CD8-positive, alpha-beta memory T cell (primary cell): ENCODE measurements at regions of chr3 and their contacts with region 1.

Region 1: DNA sequence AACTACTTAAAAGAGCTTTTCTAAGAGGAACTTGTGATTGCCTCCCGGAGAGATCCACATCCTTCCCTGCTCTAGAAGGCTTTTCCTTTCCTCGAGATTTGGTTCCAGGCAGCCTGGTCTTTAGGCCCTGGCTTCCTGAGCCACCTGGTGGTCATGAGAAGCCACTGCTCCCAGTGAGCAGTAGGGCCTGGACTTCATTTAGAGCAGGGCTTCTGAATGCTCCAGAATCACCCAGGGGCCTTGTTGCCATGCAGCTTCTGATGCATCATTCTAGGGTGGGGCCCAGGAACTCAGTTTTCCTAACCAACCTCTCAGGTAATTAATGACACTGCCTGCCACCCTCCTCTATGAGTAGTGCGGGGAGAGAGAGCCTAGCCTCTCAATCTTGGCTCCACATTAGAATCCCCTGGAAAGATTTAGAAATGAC is 29.6 kb downstream of the PSMD6 start:
- DNase-seq: peak; percentile 23 to 73 (median 56)
- H3K4me3 ChIP-seq: no peak overlapping the region
- H3K4me3 Mint-ChIP-seq: no peak overlapping the region
- H3K27ac ChIP-seq: no peak overlapping the region
- H3K27ac Mint-ChIP-seq: peak overlapping the region; percentile 37 to 88 (median 64)
- H3K4me1 ChIP-seq: peaks cover 17% of the 10 kb centered on the region
- H3K4me1 Mint-ChIP-seq: peaks cover 39 to 66% (median 50%) of the 10 kb centered on the region in 3 donors
- H3K27me3 ChIP-seq: no peaks in the 10 kb centered on the region
- H3K27me3 Mint-ChIP-seq: no peaks in the 10 kb centered on the region

Region 2: DNA sequence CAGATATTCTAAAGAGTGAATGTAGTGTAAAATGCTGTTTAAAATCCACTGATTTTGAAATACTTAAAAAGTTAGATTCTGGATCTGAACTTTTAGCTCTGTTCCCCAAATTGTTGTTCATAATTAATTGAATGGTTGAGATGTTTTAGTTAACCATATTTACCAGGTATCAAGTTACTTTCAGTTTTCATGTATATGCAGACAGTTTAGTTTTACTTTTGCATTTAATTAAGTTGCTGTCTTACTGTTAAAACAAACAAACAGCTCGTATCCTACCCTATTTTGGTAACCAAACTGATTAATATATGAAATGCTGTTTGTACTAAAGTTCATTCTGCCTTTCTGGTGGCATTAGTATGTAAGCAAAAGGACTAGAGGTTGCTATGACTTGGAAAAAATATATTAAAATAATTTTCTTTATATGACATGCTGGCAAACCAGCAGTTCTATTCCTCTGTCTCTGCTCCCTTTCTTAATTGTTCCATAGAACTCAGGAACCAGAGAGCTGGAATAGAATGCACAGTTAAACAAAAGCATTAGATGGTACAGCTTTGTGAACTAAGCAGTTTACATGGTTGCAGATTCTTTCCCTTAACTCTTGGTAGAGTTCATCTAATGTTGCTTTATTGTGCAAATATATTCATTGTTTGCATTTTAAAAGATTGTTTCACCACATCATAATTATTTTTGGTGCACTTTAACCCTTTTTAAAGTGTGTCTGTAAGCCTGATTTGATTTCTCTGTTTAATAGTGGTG is 42.0 kb before region 1 on chr3:
- CTCF ChIA-PET with region 1: interaction called, 18 read pairs
- POLR2A ChIA-PET with region 1: no interaction called
- DNase-seq: no peak
- H3K4me3 ChIP-seq: no peak overlapping the region
- H3K4me3 Mint-ChIP-seq: peak overlapping the region in 6 of 7 donors; percentile 27 to 76 (median 57)
- H3K27ac ChIP-seq: no peak overlapping the region
- H3K27ac Mint-ChIP-seq: peak overlapping the region; percentile 62 to 91 (median 78)
- H3K4me1 ChIP-seq: peaks cover 20% of the 10 kb centered on the region
- H3K4me1 Mint-ChIP-seq: peaks cover 49 to 67% (median 61%) of the 10 kb centered on the region in 3 donors
- H3K27me3 ChIP-seq: no peaks in the 10 kb centered on the region
- H3K27me3 Mint-ChIP-seq: no peaks in the 10 kb centered on the region

Region 3: DNA sequence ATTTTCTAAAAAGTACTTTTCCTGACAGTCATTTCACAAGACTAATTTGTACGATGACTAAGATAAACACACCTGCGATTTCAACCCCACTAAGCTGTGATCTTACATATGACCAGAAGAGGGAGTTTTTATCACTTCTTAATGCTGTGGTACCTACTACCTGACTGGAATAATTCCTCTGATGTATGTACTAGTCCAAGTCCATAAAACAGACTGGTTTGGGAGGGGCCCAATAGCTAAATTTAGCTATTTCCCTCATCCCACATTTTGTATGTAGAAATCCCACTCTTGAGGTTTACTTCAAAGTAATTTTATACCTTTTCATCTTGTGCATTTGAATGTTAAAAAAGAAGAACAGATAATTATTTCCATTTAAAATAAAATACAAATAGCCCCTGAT is 31.8 kb before region 1 on chr3:
- CTCF ChIA-PET with region 1: interaction called, 142 read pairs
- POLR2A ChIA-PET with region 1: interaction called, 5 read pairs
- DNase-seq: peak in 2 of 5 donors; percentile 58 to 62
- H3K4me3 ChIP-seq: no peak overlapping the region
- H3K4me3 Mint-ChIP-seq: no peak overlapping the region
- H3K27ac ChIP-seq: no peak overlapping the region
- H3K27ac Mint-ChIP-seq: peak overlapping the region in 3 of 8 donors; percentile 55 to 70 (median 65)
- H3K4me1 ChIP-seq: peaks cover 16% of the 10 kb centered on the region
- H3K4me1 Mint-ChIP-seq: peaks cover 36 to 77% (median 77%) of the 10 kb centered on the region in 3 donors
- H3K27me3 ChIP-seq: no peaks in the 10 kb centered on the region
- H3K27me3 Mint-ChIP-seq: no peaks in the 10 kb centered on the region

Region 4: GRCh38 chr3:63967675-63968611 is 25.7 kb before region 1 on chr3:
- CTCF ChIA-PET with region 1: interaction called, 142 read pairs
- POLR2A ChIA-PET with region 1: interaction called, 13 read pairs
- DNase-seq: peak; percentile 14 to 89 (median 63)
- H3K4me3 ChIP-seq: peak overlapping the region; percentile 98
- H3K4me3 Mint-ChIP-seq: peak overlapping the region; percentile 88 to 99 (median 90)
- H3K27ac ChIP-seq: peak overlapping the region; percentile 75
- H3K27ac Mint-ChIP-seq: peak overlapping the region; percentile 81 to 98 (median 94)
- H3K4me1 ChIP-seq: peaks cover 62% of the 10 kb centered on the region
- H3K4me1 Mint-ChIP-seq: peaks cover 58 to 97% (median 91%) of the 10 kb centered on the region in 3 donors
- H3K27me3 ChIP-seq: no peaks in the 10 kb centered on the region
- H3K27me3 Mint-ChIP-seq: no peaks in the 10 kb centered on the region

Region 5: GRCh38 chr3:63975723-63976122 is 17.9 kb before region 1 on chr3:
- CTCF ChIA-PET with region 1: interaction called, 142 read pairs
- POLR2A ChIA-PET with region 1: interaction called, 4 read pairs
- DNase-seq: no peak
- H3K4me3 ChIP-seq: no peak overlapping the region
- H3K4me3 Mint-ChIP-seq: peak overlapping the region; percentile 32 to 74 (median 49)
- H3K27ac ChIP-seq: no peak overlapping the region
- H3K27ac Mint-ChIP-seq: peak overlapping the region; percentile 68 to 95 (median 80)
- H3K4me1 ChIP-seq: peaks cover 92% of the 10 kb centered on the region
- H3K4me1 Mint-ChIP-seq: peaks cover 92 to 100% (median 100%) of the 10 kb centered on the region in 3 donors
- H3K27me3 ChIP-seq: no peaks in the 10 kb centered on the region
- H3K27me3 Mint-ChIP-seq: peaks cover 0 to 2% of the 10 kb centered on the region in 2 donors

Region 6: DNA sequence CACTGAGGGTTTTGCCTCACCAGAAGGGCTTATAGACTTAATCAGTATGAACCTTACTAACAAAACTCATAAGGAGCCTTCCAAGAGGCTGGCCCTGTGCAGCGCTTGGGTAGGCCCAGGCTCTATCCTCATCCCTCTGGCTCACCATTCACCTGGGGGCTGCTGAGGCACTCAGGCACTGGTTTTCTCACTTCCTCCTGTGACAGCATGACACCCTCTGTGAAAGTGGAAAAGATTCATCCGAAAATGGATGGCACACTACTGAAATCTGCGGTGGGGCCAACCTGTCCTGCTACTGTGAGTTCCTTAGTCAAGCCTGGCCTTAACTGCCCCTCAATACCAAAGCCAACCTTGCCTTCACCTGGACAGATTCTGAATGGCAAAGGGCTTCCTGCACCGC is 11.7 kb before region 1 on chr3:
- CTCF ChIA-PET with region 1: interaction called, 124 read pairs
- POLR2A ChIA-PET with region 1: interaction called, 3 read pairs
- DNase-seq: no peak
- H3K4me3 ChIP-seq: no peak overlapping the region
- H3K4me3 Mint-ChIP-seq: peak overlapping the region in 2 of 7 donors; percentile 12 to 34
- H3K27ac ChIP-seq: no peak overlapping the region
- H3K27ac Mint-ChIP-seq: peak overlapping the region in 7 of 8 donors; percentile 61 to 95 (median 83)
- H3K4me1 ChIP-seq: peaks cover 58% of the 10 kb centered on the region
- H3K4me1 Mint-ChIP-seq: peaks cover 72 to 96% (median 91%) of the 10 kb centered on the region in 3 donors
- H3K27me3 ChIP-seq: no peaks in the 10 kb centered on the region
- H3K27me3 Mint-ChIP-seq: no peaks in the 10 kb centered on the region

Region 7: GRCh38 chr3:64016941-64017620 is 23.4 kb after region 1 on chr3:
- CTCF ChIA-PET with region 1: interaction called, 12 read pairs
- POLR2A ChIA-PET with region 1: no interaction called
- DNase-seq: no peak
- H3K4me3 ChIP-seq: no peak overlapping the region
- H3K4me3 Mint-ChIP-seq: peak overlapping the region in 1 of 7 donors; percentile 24
- H3K27ac ChIP-seq: no peak overlapping the region
- H3K27ac Mint-ChIP-seq: peak overlapping the region in 6 of 8 donors; percentile 8 to 84 (median 52)
- H3K4me1 ChIP-seq: peaks cover 17% of the 10 kb centered on the region
- H3K4me1 Mint-ChIP-seq: peaks cover 38 to 62% (median 59%) of the 10 kb centered on the region in 3 donors
- H3K27me3 ChIP-seq: no peaks in the 10 kb centered on the region
- H3K27me3 Mint-ChIP-seq: no peaks in the 10 kb centered on the region

Region 8: DNA sequence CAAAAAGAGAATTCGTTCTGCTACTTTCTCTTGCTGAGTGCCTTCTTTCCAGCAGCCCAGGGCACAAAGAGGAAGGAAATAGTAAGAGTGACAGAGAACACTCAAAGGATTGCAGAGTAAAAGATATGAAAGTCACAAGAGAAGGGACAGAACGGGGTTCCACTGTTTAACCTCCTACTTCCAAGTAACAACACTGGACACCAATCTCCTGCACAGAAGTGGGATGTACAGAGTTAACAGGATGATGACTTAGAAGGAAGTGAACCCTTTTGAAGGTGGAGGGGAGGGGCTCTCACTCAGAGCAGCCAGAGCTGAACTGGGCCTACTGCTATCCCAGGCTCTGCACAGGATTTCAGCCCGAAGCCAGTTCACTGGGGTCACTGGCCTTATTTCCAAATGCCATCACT is 361.7 kb after region 1 on chr3:
- CTCF ChIA-PET with region 1: no interaction called
- POLR2A ChIA-PET with region 1: no interaction called
- DNase-seq: no peak
- H3K4me3 ChIP-seq: no peak overlapping the region
- H3K4me3 Mint-ChIP-seq: no peak overlapping the region
- H3K27ac ChIP-seq: no peak overlapping the region
- H3K27ac Mint-ChIP-seq: no peak overlapping the region
- H3K4me1 ChIP-seq: no peaks in the 10 kb centered on the region
- H3K4me1 Mint-ChIP-seq: no peaks in the 10 kb centered on the region
- H3K27me3 ChIP-seq: no peaks in the 10 kb centered on the region
- H3K27me3 Mint-ChIP-seq: peaks cover under 1 to 1% of the 10 kb centered on the region in 2 donors

Region 9: GRCh38 chr3:64431526-64432091 is 437.9 kb after region 1 on chr3:
- CTCF ChIA-PET with region 1: no interaction called
- POLR2A ChIA-PET with region 1: no interaction called
- DNase-seq: no peak
- H3K4me3 ChIP-seq: no peak overlapping the region
- H3K4me3 Mint-ChIP-seq: no peak overlapping the region
- H3K27ac ChIP-seq: no peak overlapping the region
- H3K27ac Mint-ChIP-seq: no peak overlapping the region
- H3K4me1 ChIP-seq: no peaks in the 10 kb centered on the region
- H3K4me1 Mint-ChIP-seq: no peaks in the 10 kb centered on the region
- H3K27me3 ChIP-seq: no peaks in the 10 kb centered on the region
- H3K27me3 Mint-ChIP-seq: peaks cover 2 to 12% of the 10 kb centered on the region in 2 donors